ENCODE measurements at regions of chr3 and their contacts with region 1.

Region 1: DNA sequence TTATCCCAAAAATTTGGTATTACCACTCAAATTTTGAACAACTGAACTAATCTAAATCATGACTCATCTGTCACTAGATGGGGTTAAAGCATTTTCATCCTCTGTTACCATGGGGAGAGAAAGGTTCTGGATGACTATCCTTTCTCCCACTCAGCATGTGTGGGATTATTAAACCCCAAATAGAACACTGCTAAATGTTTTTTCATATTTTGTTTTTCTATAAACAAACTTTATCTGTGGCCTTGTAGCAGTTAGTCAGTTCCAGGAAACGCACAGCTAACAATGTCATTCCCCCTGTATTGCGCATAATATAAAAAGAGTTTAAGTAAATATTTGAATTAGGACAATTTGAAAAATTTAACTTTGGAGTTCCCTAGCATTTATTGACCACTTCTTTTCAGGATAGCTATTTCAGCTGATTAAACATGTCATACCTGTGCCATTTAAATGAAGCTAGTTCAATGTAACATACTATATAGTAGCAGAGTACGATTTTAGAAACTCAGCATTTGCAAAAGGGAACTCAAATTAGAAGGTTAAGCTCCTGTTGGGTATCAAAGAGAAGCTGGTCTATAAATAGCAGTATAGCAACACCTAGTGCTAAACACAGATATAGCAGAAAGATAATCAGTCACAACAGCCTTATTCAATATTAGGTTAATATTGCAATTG is 9.2 kb upstream of the TMEM212 start:
- DNase-seq: no peak

Region 2: GRCh38 chr3:172135820-172136219 is 301.9 kb after region 1 on chr3:
- intact Hi-C with region 1: loop called in 1 of 2 experiments (anchors 2 kb)
- DNase-seq: no peak

Region 3: GRCh38 chr3:172692751-172693338 is 858.9 kb after region 1 on chr3:
- intact Hi-C with region 1: no loop called
- DNase-seq: no peak